Activated T-helper 1 cell treated with anti-CD3 and anti-CD28 coated beads, Interleukin-12 subunit alpha, Interleukin-12 subunit beta, Interleukin-2, Interleukin-4 antibody, amounts not matched to agents 30 ng/mL and 10 ng/mL and 1 ng/mL, durations not matched to agents 14 hours and 24 hours and 36 hours (primary cell): ENCODE measurements at regions of chr3 and their contacts with region 1.

Region 1: GRCh38 chr3:146218880-146219866 is 31.7 kb downstream of the PLSCR4 start:
- DNase-seq: no peak
- H3K4me3 Mint-ChIP-seq: no peak overlapping the region
- H3K27ac Mint-ChIP-seq: no peak overlapping the region
- H3K4me1 Mint-ChIP-seq: no peaks in the 10 kb centered on the region
- H3K27me3 Mint-ChIP-seq: peaks cover 9% of the 10 kb centered on the region

Region 2: DNA sequence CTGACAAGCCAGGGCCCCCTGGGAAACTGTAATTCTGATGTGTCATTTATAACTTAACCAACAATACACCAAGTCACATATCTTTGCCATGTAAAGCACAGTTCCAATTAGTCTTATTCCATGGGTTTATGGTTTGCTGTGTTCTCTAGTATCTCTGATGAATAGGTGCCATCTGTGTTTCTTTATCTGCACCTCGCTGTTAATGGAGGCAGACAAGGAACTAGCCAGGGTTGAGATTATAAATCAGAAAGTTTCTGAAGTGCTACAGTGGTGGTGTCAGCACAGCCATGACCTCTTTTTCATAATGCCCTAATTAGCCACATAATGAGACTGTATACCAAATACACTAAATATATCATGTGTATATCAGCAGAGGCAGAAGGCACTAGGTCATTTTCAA is 924.6 kb before region 1 on chr3:
- intact Hi-C with region 1: no loop called
- DNase-seq: no peak
- H3K4me3 Mint-ChIP-seq: no peak overlapping the region
- H3K27ac Mint-ChIP-seq: no peak overlapping the region
- H3K4me1 Mint-ChIP-seq: no peaks in the 10 kb centered on the region
- H3K27me3 Mint-ChIP-seq: no peaks in the 10 kb centered on the region

Region 3: GRCh38 chr3:146326670-146327543 is 107.7 kb after region 1 on chr3:
- intact Hi-C with region 1: loop called (anchors 2 kb)
- DNase-seq: no peak
- H3K4me3 Mint-ChIP-seq: no peak overlapping the region
- H3K27ac Mint-ChIP-seq: no peak overlapping the region
- H3K4me1 Mint-ChIP-seq: no peaks in the 10 kb centered on the region
- H3K27me3 Mint-ChIP-seq: no peaks in the 10 kb centered on the region